PC-3 (cell line): ENCODE measurements at regions of chr2 and their contacts with region 1.

Region 1: DNA sequence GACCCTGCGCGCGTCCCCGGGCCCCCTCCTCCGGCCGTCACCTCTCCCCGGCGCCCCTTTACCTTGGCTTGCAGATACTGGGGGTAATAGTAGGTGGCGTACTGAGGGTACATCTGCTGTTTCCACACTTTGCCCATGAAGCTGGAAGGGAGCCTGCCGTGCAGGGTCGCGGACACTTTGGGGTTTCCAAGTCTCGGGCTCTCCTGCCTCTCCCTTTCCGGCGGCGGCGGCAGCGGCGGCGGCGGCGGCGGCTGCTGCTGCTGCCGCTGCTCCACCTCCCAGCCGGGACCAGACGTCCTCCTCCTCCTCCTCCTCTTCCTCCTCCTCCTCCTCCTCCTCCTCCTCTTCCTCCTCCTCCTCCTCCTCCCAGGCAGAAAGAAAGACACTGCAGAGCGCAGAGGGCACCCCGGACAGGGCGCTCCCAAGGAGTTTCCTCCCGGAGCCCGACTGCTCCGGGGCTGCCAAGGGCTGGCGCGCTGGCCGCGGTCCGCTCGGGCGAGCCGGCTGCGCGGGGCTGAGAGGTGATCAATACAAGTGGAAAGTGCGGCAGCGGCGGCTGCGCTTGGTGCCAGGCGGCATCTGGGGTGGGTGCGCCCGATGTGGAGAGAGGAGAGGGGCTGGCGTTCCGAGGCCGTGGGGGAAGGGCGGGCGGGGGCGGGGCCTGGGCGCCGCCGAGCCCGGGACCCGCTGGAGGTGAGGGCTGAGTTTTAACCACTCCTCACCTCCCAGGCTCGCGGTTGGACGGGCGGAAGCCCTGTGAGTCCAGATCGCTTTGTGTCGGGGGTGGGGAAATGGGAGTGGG is at the start of gene RBMS1:
- DNase-seq: peak; percentile 63
- ATAC-seq: peak; percentile 48
- H3K4me3 ChIP-seq: peak within 1 kb of the TSS; percentile 93
- H3K27ac ChIP-seq: peak within 1 kb of the TSS; percentile 84
- H3K4me1 ChIP-seq: peaks cover 32% of the 10 kb centered on the region; the same call in 1 of the 2 replicates
- H3K27me3 ChIP-seq: no peaks in the 10 kb centered on the region
- CTCF ChIP-seq: no peak
- total RNA-seq, gene RBMS1: 36.4 and 38.8 TPM in 2 replicates

Region 2: GRCh38 chr2:160417745-160418397 is 75.6 kb before region 1 on chr2:
- CTCF ChIA-PET with region 1: no interaction called
- POLR2A ChIA-PET with region 1: no interaction called
- intact Hi-C with region 1: loop called (anchors 5 kb)
- DNase-seq: peak; percentile 90
- ATAC-seq: peak; percentile 76
- H3K4me3 ChIP-seq: peak overlapping the region; percentile 55
- H3K27ac ChIP-seq: peak overlapping the region; percentile 95
- H3K4me1 ChIP-seq: peaks cover 64% of the 10 kb centered on the region
- H3K27me3 ChIP-seq: no peaks in the 10 kb centered on the region
- CTCF ChIP-seq: no peak

Region 3: GRCh38 chr2:160505256-160505655 is 11.8 kb after region 1 on chr2:
- CTCF ChIA-PET with region 1: no interaction called
- POLR2A ChIA-PET with region 1: no interaction called
- intact Hi-C with region 1: no loop called
- DNase-seq: peak; percentile 7
- ATAC-seq: peak; percentile 46; the same call in 1 of the 2 replicates
- H3K4me3 ChIP-seq: no peak overlapping the region
- H3K27ac ChIP-seq: no peak overlapping the region
- H3K4me1 ChIP-seq: peaks cover 7% of the 10 kb centered on the region; the same call in 1 of the 2 replicates
- H3K27me3 ChIP-seq: no peaks in the 10 kb centered on the region
- CTCF ChIP-seq: no peak

Region 4: GRCh38 chr2:160538559-160539355 is 45.3 kb after region 1 on chr2:
- CTCF ChIA-PET with region 1: no interaction called
- POLR2A ChIA-PET with region 1: no interaction called
- intact Hi-C with region 1: loop called (anchors 2 kb)
- DNase-seq: peak; percentile 93
- ATAC-seq: peak; percentile 99
- H3K4me3 ChIP-seq: peak overlapping the region; percentile 22; the same call in 1 of the 2 replicates
- H3K27ac ChIP-seq: peak overlapping the region; percentile 94
- H3K4me1 ChIP-seq: peaks cover 22% of the 10 kb centered on the region
- H3K27me3 ChIP-seq: no peaks in the 10 kb centered on the region
- CTCF ChIP-seq: no peak

Region 5: GRCh38 chr2:160590664-160591063 is 97.2 kb after region 1 on chr2:
- CTCF ChIA-PET with region 1: no interaction called
- POLR2A ChIA-PET with region 1: no interaction called
- intact Hi-C with region 1: loop called (anchors 5 kb)
- DNase-seq: no peak
- ATAC-seq: no peak
- H3K4me3 ChIP-seq: no peak overlapping the region
- H3K27ac ChIP-seq: no peak overlapping the region
- H3K4me1 ChIP-seq: no peaks in the 10 kb centered on the region
- H3K27me3 ChIP-seq: no peaks in the 10 kb centered on the region
- CTCF ChIP-seq: no peak

Region 6: DNA sequence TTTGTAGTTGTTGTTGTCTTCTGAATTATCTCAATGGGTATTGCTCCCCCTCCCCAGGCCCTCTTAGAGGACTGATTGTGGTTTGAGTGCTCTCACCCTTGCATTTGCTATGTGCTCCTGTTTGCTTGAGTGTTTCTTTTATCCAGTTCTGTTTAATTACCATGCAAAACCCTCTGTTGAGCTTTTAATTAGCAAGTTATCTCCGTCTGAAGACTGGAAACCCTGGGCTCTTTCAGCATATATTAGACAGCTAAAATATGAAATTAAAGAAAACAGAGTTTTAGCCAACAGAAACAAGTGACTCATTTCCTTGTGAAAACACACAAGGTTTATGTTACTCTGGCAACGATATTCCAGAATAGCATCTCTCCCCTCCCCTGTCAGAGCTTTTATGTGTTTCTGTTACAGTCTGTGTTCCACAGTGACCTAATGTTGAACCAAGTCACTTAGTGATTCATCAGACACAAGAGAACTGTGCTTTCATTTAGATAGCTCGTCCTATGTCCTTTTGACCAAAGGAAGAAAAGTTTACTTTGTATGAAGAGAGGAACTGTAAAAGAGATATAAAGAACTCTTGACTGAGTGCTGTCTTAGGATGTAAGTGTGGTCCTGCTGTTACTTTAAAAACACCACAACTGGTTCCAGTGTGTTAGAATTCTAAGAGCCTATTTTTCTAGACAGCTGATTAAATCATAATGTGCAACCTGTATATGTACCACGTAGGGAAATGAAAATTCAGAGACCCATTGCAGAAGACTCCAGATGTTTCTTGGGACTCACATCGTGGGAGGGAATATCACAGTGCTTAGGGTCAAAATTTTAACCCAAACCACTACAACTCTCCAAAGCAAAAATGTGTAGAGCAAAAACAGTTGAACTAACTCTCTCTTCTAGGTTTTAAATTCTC is 173.0 kb after region 1 on chr2:
- CTCF ChIA-PET with region 1: no interaction called
- POLR2A ChIA-PET with region 1: no interaction called
- intact Hi-C with region 1: loop called (anchors 5 kb)
- DNase-seq: peak; percentile 97
- ATAC-seq: peak; percentile 97
- H3K4me3 ChIP-seq: peak overlapping the region; percentile 52
- H3K27ac ChIP-seq: peak overlapping the region; percentile 92
- H3K4me1 ChIP-seq: peaks cover 40% of the 10 kb centered on the region
- H3K27me3 ChIP-seq: no peaks in the 10 kb centered on the region
- CTCF ChIP-seq: no peak

Region 7: DNA sequence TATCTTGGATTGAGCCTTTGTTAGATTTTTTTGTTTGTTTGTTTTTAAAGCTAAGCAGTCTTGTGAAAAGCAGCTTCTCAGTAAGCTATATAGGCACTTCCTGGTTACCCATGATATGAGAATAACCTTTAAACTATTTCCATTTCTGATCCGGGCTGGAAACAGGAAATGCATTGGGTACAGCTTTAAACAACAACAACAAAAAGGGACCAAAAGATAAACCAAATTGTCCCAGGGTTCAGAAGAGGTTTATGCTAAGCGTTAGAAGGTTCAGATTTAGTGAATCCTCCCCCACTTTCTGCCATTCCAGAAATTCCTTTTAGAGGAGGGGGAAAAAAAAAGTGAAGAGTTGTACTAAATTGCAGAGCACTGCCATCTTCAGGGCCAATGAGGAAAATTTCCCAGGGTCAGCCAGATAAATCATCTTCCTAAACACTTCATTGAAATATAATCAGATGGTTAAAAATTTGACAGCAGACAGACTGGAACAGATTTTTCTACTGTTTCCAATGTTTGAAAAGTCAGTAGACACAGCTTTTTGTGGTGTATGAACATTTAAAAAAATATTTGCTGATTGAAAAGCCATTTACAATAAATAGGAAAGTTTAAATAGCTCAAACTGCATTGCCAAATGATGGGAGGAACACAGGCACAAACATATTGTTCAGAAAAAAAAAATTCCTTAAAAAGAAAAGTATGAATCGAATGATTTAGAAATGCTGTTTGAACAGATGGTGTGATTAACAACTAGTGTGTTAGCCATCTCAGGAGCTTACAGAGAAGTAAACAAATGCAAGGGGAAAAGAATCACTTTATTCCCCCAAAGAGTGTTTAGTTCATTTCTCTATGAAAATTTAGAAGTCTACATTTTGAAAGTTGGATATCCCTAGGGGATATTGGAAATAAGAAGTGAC is 476.9 kb after region 1 on chr2:
- CTCF ChIA-PET with region 1: interaction called, 11 read pairs
- POLR2A ChIA-PET with region 1: no interaction called
- intact Hi-C with region 1: loop called (anchors 5 kb)
- DNase-seq: peak; percentile 87
- ATAC-seq: peak; percentile 70
- H3K4me3 ChIP-seq: peak overlapping the region; percentile 26; the same call in 1 of the 2 replicates
- H3K27ac ChIP-seq: peak overlapping the region; percentile 65
- H3K4me1 ChIP-seq: peaks cover 11% of the 10 kb centered on the region
- H3K27me3 ChIP-seq: no peaks in the 10 kb centered on the region
- CTCF ChIP-seq: peak; percentile 94